CD4-positive, alpha-beta memory T cell (primary cell): ENCODE measurements at regions of chr15 and their contacts with region 1.

Region 1: GRCh38 chr15:66851226-66852071 is 149.4 kb downstream of the SMAD6 start:
- DNase-seq: peak; percentile 56 to 64 (median 59)
- H3K4me3 ChIP-seq: no peak overlapping the region
- H3K4me3 Mint-ChIP-seq: peak overlapping the region in 7 of 8 donors; percentile 49 to 80 (median 63)
- H3K27ac ChIP-seq: no peak overlapping the region
- H3K27ac Mint-ChIP-seq: no peak overlapping the region
- H3K4me1 ChIP-seq: peaks cover 7% of the 10 kb centered on the region
- H3K4me1 Mint-ChIP-seq: peaks cover 4 to 8% (median 6%) of the 10 kb centered on the region in 4 donors
- H3K27me3 ChIP-seq: no peaks in the 10 kb centered on the region
- H3K27me3 Mint-ChIP-seq: peaks cover 12 to 13% of the 10 kb centered on the region in 2 donors

Region 2: GRCh38 chr15:66603301-66604179 is 247.9 kb before region 1 on chr15:
- CTCF ChIA-PET with region 1: interaction called, 65 read pairs
- POLR2A ChIA-PET with region 1: no interaction called
- intact Hi-C with region 1: loop called (anchors 1 kb)
- DNase-seq: peak in 4 of 5 donors; percentile 41 to 49 (median 48)
- H3K4me3 ChIP-seq: no peak overlapping the region
- H3K4me3 Mint-ChIP-seq: no peak overlapping the region
- H3K27ac ChIP-seq: no peak overlapping the region
- H3K27ac Mint-ChIP-seq: no peak overlapping the region
- H3K4me1 ChIP-seq: no peaks in the 10 kb centered on the region
- H3K4me1 Mint-ChIP-seq: peaks cover 0 to under 1% (median under 1%) of the 10 kb centered on the region in 4 donors
- H3K27me3 ChIP-seq: no peaks in the 10 kb centered on the region
- H3K27me3 Mint-ChIP-seq: peaks cover 5 to 12% of the 10 kb centered on the region in 2 donors

Region 3: DNA sequence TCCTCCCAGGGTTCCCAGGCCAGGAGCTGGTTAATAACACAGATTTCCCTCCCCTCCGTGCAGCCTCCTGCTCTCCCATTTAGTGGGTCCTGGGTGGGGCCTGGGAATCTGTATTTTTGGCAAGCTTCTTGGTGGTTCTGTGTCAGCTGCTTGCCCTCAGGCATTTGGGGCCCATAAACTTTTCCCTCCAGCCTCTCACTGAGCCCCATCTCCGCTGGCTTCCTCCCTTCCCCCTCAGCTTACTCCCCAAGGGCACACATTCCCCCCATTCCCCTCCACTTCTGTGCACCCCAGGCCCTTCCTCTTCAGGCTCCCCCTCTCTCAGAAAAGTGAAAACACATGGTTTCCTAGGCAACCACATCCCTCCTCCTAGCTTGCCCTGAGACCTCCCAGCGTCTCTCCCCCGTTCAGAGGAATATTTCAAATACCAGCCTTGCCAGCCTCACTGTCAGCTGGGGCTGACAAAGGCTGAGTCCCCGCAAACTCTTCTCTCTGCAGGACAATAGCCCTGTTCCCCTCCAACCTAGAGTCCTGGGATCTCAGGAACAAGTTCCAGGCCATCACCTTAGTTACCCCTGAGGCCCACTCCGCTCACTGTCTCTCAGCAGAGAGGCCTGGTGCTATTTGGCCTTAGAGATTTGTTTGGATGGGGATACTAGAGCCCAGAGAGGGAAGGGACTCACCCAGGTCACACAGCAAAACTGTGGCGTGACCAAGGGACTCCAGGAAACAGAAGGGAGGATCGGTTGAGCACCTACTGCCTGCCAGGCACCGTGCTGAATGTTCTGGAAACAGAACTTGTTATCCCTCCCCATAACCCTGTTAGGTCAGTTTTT is 194.0 kb before region 1 on chr15:
- CTCF ChIA-PET with region 1: no interaction called
- POLR2A ChIA-PET with region 1: no interaction called
- intact Hi-C with region 1: no loop called
- DNase-seq: no peak
- H3K4me3 ChIP-seq: no peak overlapping the region
- H3K4me3 Mint-ChIP-seq: peak overlapping the region in 1 of 8 donors; percentile 42
- H3K27ac ChIP-seq: no peak overlapping the region
- H3K27ac Mint-ChIP-seq: no peak overlapping the region
- H3K4me1 ChIP-seq: no peaks in the 10 kb centered on the region
- H3K4me1 Mint-ChIP-seq: peaks cover 3 to 10% (median 4%) of the 10 kb centered on the region in 4 donors
- H3K27me3 ChIP-seq: no peaks in the 10 kb centered on the region
- H3K27me3 Mint-ChIP-seq: peaks cover 11 to 14% of the 10 kb centered on the region in 2 donors

Region 4: DNA sequence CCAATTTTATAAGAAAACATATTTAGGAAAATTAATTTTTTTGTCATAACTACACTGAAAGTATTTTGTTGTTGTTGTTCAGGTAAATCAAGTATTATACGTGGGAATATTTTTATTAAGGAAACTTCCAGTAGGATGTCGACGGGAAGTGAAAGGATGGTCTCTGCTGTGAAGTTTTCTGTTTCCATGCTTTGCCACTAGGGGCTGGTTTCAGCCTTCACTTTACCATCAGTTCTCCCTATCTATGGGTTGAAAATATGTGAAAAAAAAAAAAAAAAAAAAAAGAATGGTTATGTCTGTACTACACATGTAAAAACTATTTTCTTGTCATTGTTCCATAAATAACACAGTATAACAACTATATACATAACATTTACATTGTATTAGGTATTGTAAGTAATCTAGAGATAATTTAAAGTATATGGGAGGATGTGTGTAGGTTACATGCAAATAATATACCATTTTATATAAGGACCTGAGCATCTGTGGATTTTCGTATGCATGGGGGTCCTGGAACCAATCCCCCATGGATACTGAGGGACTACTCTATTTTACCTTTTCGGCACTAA is 12.7 kb before region 1 on chr15:
- CTCF ChIA-PET with region 1: interaction called, 23 read pairs
- POLR2A ChIA-PET with region 1: no interaction called
- intact Hi-C with region 1: no loop called
- DNase-seq: no peak
- H3K4me3 ChIP-seq: no peak overlapping the region
- H3K4me3 Mint-ChIP-seq: no peak overlapping the region
- H3K27ac ChIP-seq: no peak overlapping the region
- H3K27ac Mint-ChIP-seq: no peak overlapping the region
- H3K4me1 ChIP-seq: no peaks in the 10 kb centered on the region
- H3K4me1 Mint-ChIP-seq: peaks cover 3 to 8% (median 5%) of the 10 kb centered on the region in 4 donors
- H3K27me3 ChIP-seq: peaks cover 7% of the 10 kb centered on the region
- H3K27me3 Mint-ChIP-seq: peaks cover 19 to 20% of the 10 kb centered on the region in 2 donors

Region 5: GRCh38 chr15:66862878-66863335 is 11.5 kb after region 1 on chr15:
- CTCF ChIA-PET with region 1: interaction called, 55 read pairs
- POLR2A ChIA-PET with region 1: interaction called, 3 read pairs
- intact Hi-C with region 1: no loop called
- DNase-seq: peak; percentile 47 to 66 (median 57)
- H3K4me3 ChIP-seq: no peak overlapping the region
- H3K4me3 Mint-ChIP-seq: no peak overlapping the region
- H3K27ac ChIP-seq: no peak overlapping the region
- H3K27ac Mint-ChIP-seq: no peak overlapping the region
- H3K4me1 ChIP-seq: no peaks in the 10 kb centered on the region
- H3K4me1 Mint-ChIP-seq: no peaks in the 10 kb centered on the region
- H3K27me3 ChIP-seq: no peaks in the 10 kb centered on the region
- H3K27me3 Mint-ChIP-seq: peaks cover 29 to 31% of the 10 kb centered on the region in 2 donors

Region 6: GRCh38 chr15:67385971-67386370 is 534.5 kb after region 1 on chr15:
- CTCF ChIA-PET with region 1: no interaction called
- POLR2A ChIA-PET with region 1: no interaction called
- intact Hi-C with region 1: no loop called
- DNase-seq: no peak
- H3K4me3 ChIP-seq: no peak overlapping the region
- H3K4me3 Mint-ChIP-seq: no peak overlapping the region
- H3K27ac ChIP-seq: no peak overlapping the region
- H3K27ac Mint-ChIP-seq: no peak overlapping the region
- H3K4me1 ChIP-seq: no peaks in the 10 kb centered on the region
- H3K4me1 Mint-ChIP-seq: no peaks in the 10 kb centered on the region
- H3K27me3 ChIP-seq: no peaks in the 10 kb centered on the region
- H3K27me3 Mint-ChIP-seq: peaks cover 5 to 6% of the 10 kb centered on the region in 2 donors

Region 7: DNA sequence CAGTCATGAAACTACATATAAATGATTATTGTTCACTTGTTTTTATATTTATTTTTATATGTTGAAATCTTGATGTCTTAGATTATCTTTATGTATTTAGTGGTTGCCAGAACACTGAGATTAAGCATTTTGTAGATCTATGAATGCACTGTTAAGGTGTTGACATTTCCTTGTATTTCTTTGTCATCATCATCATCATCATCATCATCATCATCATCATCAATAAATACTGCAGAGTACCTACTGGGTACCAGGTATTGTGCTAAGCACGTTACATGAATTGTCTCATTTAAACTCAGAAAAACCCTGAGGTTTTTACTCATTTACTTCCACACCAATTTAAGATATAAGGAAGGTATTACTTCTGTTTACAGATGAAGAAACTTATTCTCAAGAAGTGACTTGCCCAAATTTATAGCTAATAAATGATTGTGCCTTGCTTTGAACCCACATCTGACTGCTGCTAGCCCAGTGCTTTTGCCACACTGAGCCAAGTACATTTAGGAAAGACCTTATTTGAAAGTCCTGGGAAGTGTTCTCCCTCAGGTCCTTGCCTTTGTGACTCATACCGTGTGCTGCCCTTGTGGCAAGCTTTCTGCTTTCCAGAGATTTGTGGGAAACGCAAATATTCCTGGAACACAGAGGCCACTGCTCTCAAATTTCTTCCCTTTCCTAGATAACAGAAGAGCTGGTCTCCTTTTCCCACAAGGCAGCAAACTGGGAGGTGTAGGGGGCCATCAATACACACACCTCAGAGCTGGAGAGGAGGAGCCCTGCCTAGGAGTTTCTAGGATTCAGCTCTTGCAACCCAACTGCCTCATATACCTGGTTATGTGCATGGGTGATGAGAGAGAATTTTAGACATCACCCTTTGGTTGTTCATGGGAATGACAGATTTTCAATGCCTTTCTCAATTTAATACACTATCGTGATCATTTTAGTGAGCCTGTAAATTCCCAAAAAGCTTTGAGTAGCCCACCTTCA is 554.1 kb after region 1 on chr15:
- CTCF ChIA-PET with region 1: no interaction called
- POLR2A ChIA-PET with region 1: no interaction called
- intact Hi-C with region 1: no loop called
- DNase-seq: no peak
- H3K4me3 ChIP-seq: no peak overlapping the region
- H3K4me3 Mint-ChIP-seq: no peak overlapping the region
- H3K27ac ChIP-seq: no peak overlapping the region
- H3K27ac Mint-ChIP-seq: no peak overlapping the region
- H3K4me1 ChIP-seq: no peaks in the 10 kb centered on the region
- H3K4me1 Mint-ChIP-seq: no peaks in the 10 kb centered on the region
- H3K27me3 ChIP-seq: no peaks in the 10 kb centered on the region
- H3K27me3 Mint-ChIP-seq: peaks cover 0 to 1% of the 10 kb centered on the region in 2 donors